Activated CD8-positive, alpha-beta T cell treated with anti-CD3 and anti-CD28 coated beads, Interleukin-2, amount 10 ng/mL, durations not matched to agents 7 days and 5 days (primary cell): ENCODE measurements at regions of chr10 and their contacts with region 1.

Region 1: GRCh38 chr10:43204943-43205671 is 61.8 kb downstream of the RASGEF1A start:
- DNase-seq: peak; percentile 78
- ATAC-seq: peak; percentile 74
- H3K4me3 Mint-ChIP-seq: no peak overlapping the region
- H3K27ac Mint-ChIP-seq: no peak overlapping the region
- H3K4me1 Mint-ChIP-seq: peaks cover 15% of the 10 kb centered on the region
- H3K27me3 Mint-ChIP-seq: no peaks in the 10 kb centered on the region

Region 2: GRCh38 chr10:43093423-43094076 is 111.6 kb before region 1 on chr10:
- CTCF ChIA-PET with region 1: no interaction called
- POLR2A ChIA-PET with region 1: no interaction called
- DNase-seq: no peak
- ATAC-seq: no peak
- H3K4me3 Mint-ChIP-seq: no peak overlapping the region
- H3K27ac Mint-ChIP-seq: no peak overlapping the region
- H3K4me1 Mint-ChIP-seq: peaks cover 2% of the 10 kb centered on the region
- H3K27me3 Mint-ChIP-seq: peaks cover 17% of the 10 kb centered on the region

Region 3: GRCh38 chr10:43138021-43138756 is 66.9 kb before region 1 on chr10 and contains the start of gene CSGALNACT2:
- CTCF ChIA-PET with region 1: interaction called, 45 read pairs
- POLR2A ChIA-PET with region 1: interaction called, 17 read pairs
- DNase-seq: peak; percentile 91
- ATAC-seq: peak; percentile 87
- H3K4me3 Mint-ChIP-seq: peak within 1 kb of the TSS; percentile 92
- H3K27ac Mint-ChIP-seq: peak within 1 kb of the TSS; percentile 96
- H3K4me1 Mint-ChIP-seq: peaks cover 56% of the 10 kb centered on the region
- H3K27me3 Mint-ChIP-seq: no peaks in the 10 kb centered on the region
- total RNA-seq, gene CSGALNACT2: 29.2 to 30.4 TPM

Region 4: DNA sequence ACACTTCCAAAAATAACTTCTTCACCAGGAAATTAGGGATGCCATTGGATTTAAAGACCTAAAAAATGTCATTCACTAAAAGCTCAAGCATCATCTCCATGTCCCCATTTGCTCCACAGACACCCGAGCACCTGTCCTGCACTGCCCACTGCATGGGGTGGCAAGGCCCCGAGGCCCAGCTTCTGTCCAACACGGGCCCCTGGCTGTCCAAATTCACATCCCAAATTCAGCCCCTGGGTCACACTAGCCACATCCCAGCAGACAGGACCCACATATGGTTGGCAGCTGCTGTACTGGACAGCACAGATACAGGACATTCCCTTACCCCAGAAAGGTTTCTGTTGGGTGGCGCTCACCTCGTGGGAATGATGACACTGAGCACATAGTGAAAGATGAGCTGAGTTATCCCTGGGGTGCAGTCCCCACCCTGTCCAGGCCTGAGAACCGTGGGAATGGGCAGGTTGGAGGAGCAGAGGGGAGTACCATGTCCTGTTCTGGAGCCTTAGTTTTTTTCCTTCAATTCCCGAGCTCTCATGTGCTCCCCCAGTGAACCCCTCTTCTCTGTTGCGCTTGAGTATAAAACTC is 11.5 kb before region 1 on chr10:
- CTCF ChIA-PET with region 1: interaction called, 17 read pairs
- POLR2A ChIA-PET with region 1: no interaction called
- DNase-seq: no peak
- ATAC-seq: no peak
- H3K4me3 Mint-ChIP-seq: no peak overlapping the region
- H3K27ac Mint-ChIP-seq: peak overlapping the region; percentile 40
- H3K4me1 Mint-ChIP-seq: peaks cover 6% of the 10 kb centered on the region
- H3K27me3 Mint-ChIP-seq: no peaks in the 10 kb centered on the region

Region 5: DNA sequence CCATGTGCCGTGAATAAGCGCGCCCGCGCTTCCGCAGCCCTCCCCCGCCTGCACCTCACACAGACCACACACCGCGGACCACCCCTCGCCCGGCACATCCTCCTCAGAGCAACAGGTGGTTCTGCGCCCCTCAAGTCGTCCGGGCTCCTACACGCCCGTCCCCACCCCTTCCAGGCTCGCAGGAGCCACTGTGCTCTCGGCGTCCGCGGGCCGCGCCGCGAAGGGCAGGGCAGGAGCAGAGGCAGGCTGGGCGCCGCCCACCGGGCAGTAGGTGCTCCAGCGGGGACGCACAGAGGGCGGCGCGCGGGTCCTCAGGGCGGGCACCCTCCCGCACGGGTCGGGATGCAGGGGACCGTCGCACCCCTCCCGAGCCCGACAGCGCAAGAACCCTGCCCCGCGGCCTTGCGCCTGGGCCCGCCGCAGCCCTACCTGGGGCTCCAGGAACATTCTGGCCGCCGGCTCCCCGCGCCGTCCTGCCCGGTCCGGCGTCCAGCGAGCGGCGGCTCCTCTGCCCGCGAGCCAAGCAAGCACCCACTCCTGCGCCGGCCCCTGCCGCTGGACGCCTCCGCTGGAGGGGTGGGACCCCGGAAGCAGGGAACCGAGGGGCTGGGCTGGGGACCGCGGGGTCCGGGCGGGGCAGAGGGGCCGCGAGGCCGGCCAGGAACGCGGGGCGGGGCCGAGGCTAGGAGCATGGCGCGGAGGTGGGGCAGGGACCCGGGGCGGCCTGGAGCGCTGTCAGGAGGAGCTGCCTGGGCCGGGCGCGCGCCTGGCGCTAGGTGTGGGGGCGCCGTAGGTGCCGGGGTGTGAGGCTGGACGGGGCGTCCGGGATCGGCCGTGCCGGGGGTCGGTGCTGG is 24.3 kb after region 1 on chr10:
- CTCF ChIA-PET with region 1: interaction called, 24 read pairs
- POLR2A ChIA-PET with region 1: no interaction called
- DNase-seq: peak; percentile 77
- ATAC-seq: peak; percentile 70
- H3K4me3 Mint-ChIP-seq: peak overlapping the region; percentile 75
- H3K27ac Mint-ChIP-seq: peak overlapping the region; percentile 81
- H3K4me1 Mint-ChIP-seq: peaks cover 51% of the 10 kb centered on the region
- H3K27me3 Mint-ChIP-seq: peaks cover 29% of the 10 kb centered on the region

Region 6: GRCh38 chr10:43255634-43256431 is 50.7 kb after region 1 on chr10:
- CTCF ChIA-PET with region 1: interaction called, 29 read pairs
- POLR2A ChIA-PET with region 1: no interaction called
- DNase-seq: peak; percentile 76
- ATAC-seq: peak; percentile 87
- H3K4me3 Mint-ChIP-seq: no peak overlapping the region
- H3K27ac Mint-ChIP-seq: peak overlapping the region; percentile 43
- H3K4me1 Mint-ChIP-seq: peaks cover 19% of the 10 kb centered on the region
- H3K27me3 Mint-ChIP-seq: no peaks in the 10 kb centered on the region

Region 7: GRCh38 chr10:43292755-43293676 is 87.9 kb after region 1 on chr10:
- CTCF ChIA-PET with region 1: interaction called, 14 read pairs
- POLR2A ChIA-PET with region 1: no interaction called
- DNase-seq: peak; percentile 69
- ATAC-seq: peak; percentile 77
- H3K4me3 Mint-ChIP-seq: no peak overlapping the region
- H3K27ac Mint-ChIP-seq: peak overlapping the region; percentile 85
- H3K4me1 Mint-ChIP-seq: peaks cover 82% of the 10 kb centered on the region
- H3K27me3 Mint-ChIP-seq: peaks cover 11% of the 10 kb centered on the region